B cell (primary cell): ENCODE measurements at regions of chr14 and their contacts with region 1.

Region 1: DNA sequence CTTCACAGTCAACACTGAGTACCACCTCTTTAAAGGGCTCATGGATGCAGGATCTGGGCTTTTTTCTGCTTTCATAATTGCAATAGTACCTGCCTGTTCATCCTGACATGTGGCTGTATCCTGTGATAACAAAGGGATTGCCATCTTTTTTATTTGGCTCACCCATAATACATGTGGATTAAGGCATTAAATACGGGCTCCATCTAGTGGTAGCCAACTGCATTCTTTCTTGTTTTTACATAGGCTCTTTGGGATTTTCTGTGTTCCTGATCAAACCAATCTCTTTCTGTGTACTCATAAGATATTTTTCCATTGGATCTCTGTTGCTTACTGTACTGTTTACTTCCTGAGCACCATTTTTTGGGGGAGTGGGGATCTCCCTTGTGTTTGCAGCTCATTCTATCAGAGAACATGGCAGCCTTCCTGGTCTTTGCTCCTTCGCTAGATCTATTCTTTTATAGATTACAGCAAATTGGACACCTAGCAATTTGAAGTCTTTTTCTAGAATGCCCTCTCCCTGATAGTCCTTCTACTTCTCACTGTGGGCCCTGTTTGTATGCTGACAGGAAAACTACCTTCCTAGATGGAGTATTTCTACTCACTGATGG is 723.4 kb upstream of the MDGA2 start:
- DNase-seq: peak; percentile 29
- ATAC-seq: no peak
- H3K4me3 ChIP-seq: no peak overlapping the region
- H3K4me3 Mint-ChIP-seq: no peak overlapping the region
- H3K27ac ChIP-seq: no peak overlapping the region
- H3K27ac Mint-ChIP-seq: no peak overlapping the region
- H3K4me1 ChIP-seq: no peaks in the 10 kb centered on the region
- H3K4me1 Mint-ChIP-seq: no peaks in the 10 kb centered on the region
- H3K27me3 ChIP-seq: no peaks in the 10 kb centered on the region
- H3K27me3 Mint-ChIP-seq: no peaks in the 10 kb centered on the region
- CTCF ChIP-seq: peak; percentile 59

Region 2: GRCh38 chr14:49173765-49174373 is 775.1 kb after region 1 on chr14:
- CTCF ChIA-PET with region 1: interaction called, 3 read pairs
- POLR2A ChIA-PET with region 1: no interaction called
- intact Hi-C with region 1: loop called (anchors 2 kb)
- DNase-seq: peak; percentile 81
- ATAC-seq: peak; percentile 76
- H3K4me3 ChIP-seq: no peak overlapping the region
- H3K4me3 Mint-ChIP-seq: no peak overlapping the region
- H3K27ac ChIP-seq: no peak overlapping the region
- H3K27ac Mint-ChIP-seq: no peak overlapping the region
- H3K4me1 ChIP-seq: no peaks in the 10 kb centered on the region
- H3K4me1 Mint-ChIP-seq: no peaks in the 10 kb centered on the region
- H3K27me3 ChIP-seq: no peaks in the 10 kb centered on the region
- H3K27me3 Mint-ChIP-seq: peaks cover 15% of the 10 kb centered on the region
- CTCF ChIP-seq: peak; percentile 80

Region 3: GRCh38 chr14:49732896-49733295 is 1334.1 kb after region 1 on chr14:
- CTCF ChIA-PET with region 1: no interaction called
- POLR2A ChIA-PET with region 1: no interaction called
- intact Hi-C with region 1: no loop called
- DNase-seq: no peak
- ATAC-seq: no peak
- H3K4me3 ChIP-seq: no peak overlapping the region
- H3K4me3 Mint-ChIP-seq: no peak overlapping the region
- H3K27ac ChIP-seq: no peak overlapping the region
- H3K27ac Mint-ChIP-seq: no peak overlapping the region
- H3K4me1 ChIP-seq: no peaks in the 10 kb centered on the region
- H3K4me1 Mint-ChIP-seq: no peaks in the 10 kb centered on the region
- H3K27me3 ChIP-seq: no peaks in the 10 kb centered on the region
- H3K27me3 Mint-ChIP-seq: no peaks in the 10 kb centered on the region
- CTCF ChIP-seq: no peak